GM12878 (cell line): ENCODE measurements at regions of chr14 and their contacts with region 1.

Region 1: GRCh38 chr14:63745858-63746425 is 18.1 kb upstream of the SGPP1 start:
- DNase-seq: peak; percentile 80
- ATAC-seq: peak; percentile 76
- H3K4me3 ChIP-seq: no peak overlapping the region
- H3K27ac ChIP-seq: peak overlapping the region; percentile 75
- H3K4me1 ChIP-seq: peaks cover 36% of the 10 kb centered on the region
- H3K27me3 ChIP-seq: no peaks in the 10 kb centered on the region
- CTCF ChIP-seq: peak in 2 of 3 experiments; percentile 8 to 9; a peak in 1 of 6 replicates
- EP300 ChIP-seq: peak; percentile 38 to 65; a peak in 3 of 4 replicates
- POLR2A ChIP-seq: 0 out of 2 replicates have a peak, but pooled peaks have one; percentile 33
- RAD21 ChIP-seq: 0 out of 2 replicates have a peak, but pooled peaks have one; percentile 31

Region 2: GRCh38 chr14:63632932-63633514 is 112.9 kb before region 1 on chr14:
- CTCF ChIA-PET with region 1: interaction called, 20 read pairs
- POLR2A ChIA-PET with region 1: no interaction called
- RAD21 ChIA-PET with region 1: interaction called, 6 read pairs
- SMC1A ChIA-PET with region 1: interaction called, 8 read pairs
- in situ Hi-C with region 1: no loop called
- intact Hi-C with region 1: no loop called
- DNase-seq: no peak
- ATAC-seq: peak; percentile 94
- H3K4me3 ChIP-seq: no peak overlapping the region
- H3K27ac ChIP-seq: no peak overlapping the region
- H3K4me1 ChIP-seq: no peaks in the 10 kb centered on the region
- H3K27me3 ChIP-seq: no peaks in the 10 kb centered on the region
- CTCF ChIP-seq: peak; percentile 48 to 60 (median 48); a peak in 5 of 6 replicates
- EP300 ChIP-seq: no peak
- POLR2A ChIP-seq: no peak
- RAD21 ChIP-seq: peak; percentile 60

Region 3: DNA sequence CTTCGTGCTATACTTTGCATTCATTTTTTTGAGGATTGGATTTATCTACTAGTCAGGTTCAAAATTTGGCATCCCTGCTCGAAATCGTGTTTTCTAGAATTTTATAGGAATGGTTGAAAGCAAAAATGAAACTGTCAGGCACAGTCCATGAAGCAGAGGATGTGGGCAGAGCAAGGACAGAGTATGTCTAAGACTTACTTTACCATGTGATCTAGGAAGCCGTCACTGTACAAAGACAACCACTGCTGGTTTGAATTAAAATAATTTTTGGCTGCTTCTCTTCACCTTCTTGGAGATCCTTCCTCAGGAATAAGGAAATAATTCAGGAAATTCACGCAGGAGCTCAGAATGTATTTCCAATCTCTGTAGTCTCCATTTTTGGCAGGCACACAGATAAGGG is 13.5 kb after region 1 on chr14:
- CTCF ChIA-PET with region 1: interaction called, 9 read pairs
- POLR2A ChIA-PET with region 1: interaction called, 8 read pairs
- RAD21 ChIA-PET with region 1: interaction called, 12 read pairs
- SMC1A ChIA-PET with region 1: interaction called, 9 read pairs
- in situ Hi-C with region 1: no loop called
- intact Hi-C with region 1: no loop called
- DNase-seq: peak; percentile 38
- ATAC-seq: peak; percentile 95
- H3K4me3 ChIP-seq: peak overlapping the region; percentile 46; the same call in 1 of the 2 replicates
- H3K27ac ChIP-seq: peak overlapping the region; percentile 82
- H3K4me1 ChIP-seq: peaks cover 6% of the 10 kb centered on the region; the same call in 1 of the 2 replicates
- H3K27me3 ChIP-seq: no peaks in the 10 kb centered on the region
- CTCF ChIP-seq: no peak
- EP300 ChIP-seq: no peak
- POLR2A ChIP-seq: no peak
- RAD21 ChIP-seq: no peak

Region 4: GRCh38 chr14:63972323-63972932 is 226.5 kb after region 1 on chr14:
- CTCF ChIA-PET with region 1: no interaction called
- POLR2A ChIA-PET with region 1: interaction called, 10 read pairs
- RAD21 ChIA-PET with region 1: no interaction called
- SMC1A ChIA-PET with region 1: no interaction called
- in situ Hi-C with region 1: no loop called
- intact Hi-C with region 1: no loop called
- DNase-seq: no peak
- ATAC-seq: peak; percentile 70
- H3K4me3 ChIP-seq: peak overlapping the region; percentile 31; the same call in 1 of the 2 replicates
- H3K27ac ChIP-seq: peak overlapping the region; percentile 80
- H3K4me1 ChIP-seq: peaks cover 16% of the 10 kb centered on the region
- H3K27me3 ChIP-seq: no peaks in the 10 kb centered on the region
- CTCF ChIP-seq: no peak
- EP300 ChIP-seq: no peak
- POLR2A ChIP-seq: no peak
- RAD21 ChIP-seq: no peak